Activated T-helper 2 cell treated with anti-CD3 and anti-CD28 coated beads, Interferon-gamma antibody, Interleukin-2, Interleukin-4, amounts not matched to agents 10 μg/mL and 5 μg/mL and 100 μg/mL, durations not matched to agents 14 hours and 24 hours and 36 hours (primary cell): ENCODE measurements at regions of chr22 and their contacts with region 1.

Region 1: GRCh38 chr22:36359181-36359996 is 28.4 kb downstream of the MYH9 start:
- DNase-seq: no peak
- H3K4me3 Mint-ChIP-seq: peak overlapping the region; percentile 64
- H3K27ac Mint-ChIP-seq: peak overlapping the region; percentile 85
- H3K4me1 Mint-ChIP-seq: peaks cover 78% of the 10 kb centered on the region
- H3K27me3 Mint-ChIP-seq: no peaks in the 10 kb centered on the region

Region 2: DNA sequence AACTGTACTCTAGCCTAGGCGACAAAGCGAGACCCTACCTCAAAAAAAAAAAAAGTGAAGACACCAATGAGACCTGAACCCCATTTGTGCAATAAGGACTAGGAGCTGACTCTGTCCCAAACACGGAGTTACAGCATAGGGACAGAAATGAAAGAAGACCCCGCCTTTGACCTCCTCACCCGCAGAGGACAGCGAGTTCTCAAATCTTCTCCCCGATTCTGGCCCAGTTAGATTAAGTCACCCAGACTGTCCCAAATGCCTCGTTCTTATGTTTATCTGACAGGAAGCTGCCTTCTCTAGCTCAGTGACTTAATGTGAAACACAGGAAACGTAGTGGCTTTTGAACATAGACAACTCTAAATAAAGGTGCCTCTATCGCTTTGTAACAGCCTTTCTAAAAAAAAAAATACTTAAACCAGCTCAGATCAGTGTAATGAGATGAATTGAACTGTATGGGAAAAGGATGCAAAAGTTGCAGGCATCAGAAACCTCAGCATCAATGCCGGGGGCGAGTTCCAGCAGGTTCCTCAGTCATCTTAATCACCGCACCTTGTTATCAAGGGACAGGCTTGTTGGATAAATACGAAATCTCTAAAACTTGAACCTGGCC is 17.7 kb after region 1 on chr22:
- intact Hi-C with region 1: loop called (anchors 2 kb)
- DNase-seq: peak; percentile 48
- H3K4me3 Mint-ChIP-seq: peak overlapping the region; percentile 81
- H3K27ac Mint-ChIP-seq: peak overlapping the region; percentile 97
- H3K4me1 Mint-ChIP-seq: peaks cover 85% of the 10 kb centered on the region
- H3K27me3 Mint-ChIP-seq: no peaks in the 10 kb centered on the region